GM12878 (cell line): ENCODE measurements at regions of chr5 and their contacts with region 1.

Region 1: GRCh38 chr5:157718519-157718918 is 12.7 kb upstream of the THG1L start:
- DNase-seq: peak; percentile 28
- ATAC-seq: peak; percentile 98
- H3K4me3 ChIP-seq: no peak overlapping the region
- H3K27ac ChIP-seq: no peak overlapping the region
- H3K4me1 ChIP-seq: peaks cover 4% of the 10 kb centered on the region
- H3K27me3 ChIP-seq: no peaks in the 10 kb centered on the region
- CTCF ChIP-seq: peak; percentile 54 to 71 (median 57); a peak in 5 of 6 replicates
- EP300 ChIP-seq: no peak
- POLR2A ChIP-seq: no peak
- RAD21 ChIP-seq: peak; percentile 86

Region 2: GRCh38 chr5:157328277-157328912 is 390.1 kb before region 1 on chr5:
- CTCF ChIA-PET with region 1: interaction called, 16 read pairs
- POLR2A ChIA-PET with region 1: no interaction called
- RAD21 ChIA-PET with region 1: interaction called, 6 read pairs
- SMC1A ChIA-PET with region 1: interaction called, 6 read pairs
- in situ Hi-C with region 1: no loop called
- intact Hi-C with region 1: no loop called
- DNase-seq: no peak
- ATAC-seq: peak; percentile 100
- H3K4me3 ChIP-seq: no peak overlapping the region
- H3K27ac ChIP-seq: no peak overlapping the region
- H3K4me1 ChIP-seq: no peaks in the 10 kb centered on the region
- H3K27me3 ChIP-seq: no peaks in the 10 kb centered on the region
- CTCF ChIP-seq: peak; percentile 85 to 94 (median 91)
- EP300 ChIP-seq: no peak
- POLR2A ChIP-seq: no peak
- RAD21 ChIP-seq: peak; percentile 85

Region 3: GRCh38 chr5:157471709-157472108 is 246.8 kb before region 1 on chr5:
- CTCF ChIA-PET with region 1: interaction called, 57 read pairs
- POLR2A ChIA-PET with region 1: no interaction called
- RAD21 ChIA-PET with region 1: interaction called, 21 read pairs
- SMC1A ChIA-PET with region 1: interaction called, 17 read pairs
- in situ Hi-C with region 1: no loop called
- intact Hi-C with region 1: loop called (anchors 5 kb)
- DNase-seq: no peak
- ATAC-seq: peak; percentile 81
- H3K4me3 ChIP-seq: no peak overlapping the region
- H3K27ac ChIP-seq: no peak overlapping the region
- H3K4me1 ChIP-seq: no peaks in the 10 kb centered on the region
- H3K27me3 ChIP-seq: no peaks in the 10 kb centered on the region
- CTCF ChIP-seq: peak; percentile 48 to 66 (median 62); a peak in 5 of 6 replicates
- EP300 ChIP-seq: no peak
- POLR2A ChIP-seq: no peak
- RAD21 ChIP-seq: peak; percentile 68

Region 4: GRCh38 chr5:157502143-157502647 is 216.3 kb before region 1 on chr5:
- CTCF ChIA-PET with region 1: no interaction called
- POLR2A ChIA-PET with region 1: no interaction called
- RAD21 ChIA-PET with region 1: interaction called, 3 read pairs
- SMC1A ChIA-PET with region 1: interaction called, 7 read pairs
- in situ Hi-C with region 1: no loop called
- intact Hi-C with region 1: loop called (anchors 2 kb)
- DNase-seq: peak; percentile 82
- ATAC-seq: peak; percentile 83
- H3K4me3 ChIP-seq: no peak overlapping the region
- H3K27ac ChIP-seq: peak overlapping the region; percentile 89
- H3K4me1 ChIP-seq: peaks cover 70% of the 10 kb centered on the region
- H3K27me3 ChIP-seq: no peaks in the 10 kb centered on the region
- CTCF ChIP-seq: no peak
- EP300 ChIP-seq: peak; percentile 51 to 88; a peak in 3 of 4 replicates
- POLR2A ChIP-seq: no peak
- RAD21 ChIP-seq: 0 out of 2 replicates have a peak, but pooled peaks have one; percentile 13

Region 5: GRCh38 chr5:157582731-157583620 is 135.5 kb before region 1 on chr5:
- CTCF ChIA-PET with region 1: interaction called, 16 read pairs
- POLR2A ChIA-PET with region 1: no interaction called
- RAD21 ChIA-PET with region 1: no interaction called
- SMC1A ChIA-PET with region 1: no interaction called
- in situ Hi-C with region 1: no loop called
- intact Hi-C with region 1: no loop called
- DNase-seq: no peak
- ATAC-seq: peak; percentile 85
- H3K4me3 ChIP-seq: no peak overlapping the region
- H3K27ac ChIP-seq: peak overlapping the region; percentile 23; the same call in 1 of the 2 replicates
- H3K4me1 ChIP-seq: peaks cover 33% of the 10 kb centered on the region
- H3K27me3 ChIP-seq: no peaks in the 10 kb centered on the region
- CTCF ChIP-seq: peak; percentile 8 to 30 (median 13); a peak in 2 of 6 replicates
- EP300 ChIP-seq: no peak
- POLR2A ChIP-seq: no peak
- RAD21 ChIP-seq: peak; percentile 48

Region 6: DNA sequence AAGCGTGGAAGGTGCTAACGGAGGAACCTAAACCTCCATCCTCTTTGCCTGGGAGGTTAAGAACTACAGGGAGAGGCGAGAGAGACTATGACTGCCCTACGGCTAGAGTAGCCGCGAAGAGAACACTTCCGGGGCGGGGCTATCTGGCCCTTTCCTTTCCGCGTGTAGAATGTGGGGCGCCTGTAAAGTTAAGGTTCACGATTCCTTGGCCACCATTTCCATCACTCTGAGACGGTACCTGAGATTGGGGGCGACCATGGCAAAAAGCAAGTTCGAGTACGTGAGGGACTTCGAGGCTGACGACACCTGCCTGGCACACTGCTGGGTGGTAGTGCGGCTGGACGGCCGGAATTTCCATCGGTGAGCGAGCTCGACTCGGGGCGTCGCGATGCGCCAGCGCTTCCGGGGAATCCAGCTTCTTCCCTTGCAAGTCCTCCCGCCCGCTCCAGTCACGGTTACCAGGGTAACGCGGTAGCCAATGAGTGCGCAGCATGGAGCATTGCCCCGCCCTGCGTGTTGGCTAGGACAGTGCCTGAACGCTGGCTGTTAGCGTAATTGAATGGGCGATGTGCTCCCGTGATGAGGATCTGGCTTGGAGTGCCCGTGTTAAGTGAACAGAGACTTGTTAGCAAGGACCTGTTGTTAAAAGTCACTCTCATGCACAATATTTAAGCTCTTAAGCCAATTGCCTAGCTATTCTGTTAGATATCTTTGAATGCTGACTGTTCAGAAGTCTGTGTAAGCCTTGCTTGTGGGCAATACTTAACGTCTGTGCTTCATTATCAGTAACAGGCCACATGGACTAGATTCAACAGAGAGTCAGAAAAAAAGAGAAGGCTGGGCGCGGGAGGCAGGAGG is 13.0 kb after region 1 on chr5 and contains the start of gene THG1L:
- CTCF ChIA-PET with region 1: interaction called, 18 read pairs
- POLR2A ChIA-PET with region 1: interaction called, 8 read pairs
- RAD21 ChIA-PET with region 1: interaction called, 13 read pairs
- SMC1A ChIA-PET with region 1: interaction called, 23 read pairs
- in situ Hi-C with region 1: no loop called
- intact Hi-C with region 1: no loop called
- DNase-seq: peak; percentile 94
- ATAC-seq: peak; percentile 92
- H3K4me3 ChIP-seq: peak within 1 kb of the TSS; percentile 85
- H3K27ac ChIP-seq: peak within 1 kb of the TSS; percentile 92
- H3K4me1 ChIP-seq: peaks cover 21% of the 10 kb centered on the region
- H3K27me3 ChIP-seq: no peaks in the 10 kb centered on the region
- CTCF ChIP-seq: no peak
- EP300 ChIP-seq: no peak
- POLR2A ChIP-seq: peak; percentile 97
- RAD21 ChIP-seq: no peak
- polyA plus RNA-seq, gene THG1L: 37.2 to 58.0 TPM

Region 7: DNA sequence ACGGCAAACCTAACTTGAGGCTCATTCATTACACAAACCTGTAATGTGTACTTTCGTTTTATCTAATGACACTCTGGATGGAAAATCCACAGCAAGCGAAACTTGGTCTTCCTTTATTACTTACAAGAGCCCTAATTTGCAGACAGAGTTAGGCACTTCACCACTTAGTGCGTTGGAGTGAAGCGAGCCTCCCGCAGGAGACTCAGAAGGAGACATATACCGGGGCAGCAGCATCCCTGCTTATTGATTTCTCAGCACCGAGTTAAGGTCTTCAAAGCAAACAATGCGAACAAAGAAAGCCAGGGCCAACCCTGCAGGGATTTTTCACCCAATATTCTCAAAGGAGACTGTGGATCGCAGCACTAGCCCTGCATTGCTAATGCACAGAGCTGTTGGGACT is 53.6 kb after region 1 on chr5:
- CTCF ChIA-PET with region 1: no interaction called
- POLR2A ChIA-PET with region 1: no interaction called
- RAD21 ChIA-PET with region 1: no interaction called
- SMC1A ChIA-PET with region 1: no interaction called
- in situ Hi-C with region 1: no loop called
- intact Hi-C with region 1: no loop called
- DNase-seq: no peak
- ATAC-seq: peak; percentile 75
- H3K4me3 ChIP-seq: no peak overlapping the region
- H3K27ac ChIP-seq: no peak overlapping the region
- H3K4me1 ChIP-seq: no peaks in the 10 kb centered on the region
- H3K27me3 ChIP-seq: no peaks in the 10 kb centered on the region; a peak in 1 of 4 replicates
- CTCF ChIP-seq: no peak
- EP300 ChIP-seq: no peak
- POLR2A ChIP-seq: no peak
- RAD21 ChIP-seq: no peak